Ovary (tissue), 10 donors: ENCODE measurements at regions of chr1 and their contacts with region 1.

Region 1: DNA sequence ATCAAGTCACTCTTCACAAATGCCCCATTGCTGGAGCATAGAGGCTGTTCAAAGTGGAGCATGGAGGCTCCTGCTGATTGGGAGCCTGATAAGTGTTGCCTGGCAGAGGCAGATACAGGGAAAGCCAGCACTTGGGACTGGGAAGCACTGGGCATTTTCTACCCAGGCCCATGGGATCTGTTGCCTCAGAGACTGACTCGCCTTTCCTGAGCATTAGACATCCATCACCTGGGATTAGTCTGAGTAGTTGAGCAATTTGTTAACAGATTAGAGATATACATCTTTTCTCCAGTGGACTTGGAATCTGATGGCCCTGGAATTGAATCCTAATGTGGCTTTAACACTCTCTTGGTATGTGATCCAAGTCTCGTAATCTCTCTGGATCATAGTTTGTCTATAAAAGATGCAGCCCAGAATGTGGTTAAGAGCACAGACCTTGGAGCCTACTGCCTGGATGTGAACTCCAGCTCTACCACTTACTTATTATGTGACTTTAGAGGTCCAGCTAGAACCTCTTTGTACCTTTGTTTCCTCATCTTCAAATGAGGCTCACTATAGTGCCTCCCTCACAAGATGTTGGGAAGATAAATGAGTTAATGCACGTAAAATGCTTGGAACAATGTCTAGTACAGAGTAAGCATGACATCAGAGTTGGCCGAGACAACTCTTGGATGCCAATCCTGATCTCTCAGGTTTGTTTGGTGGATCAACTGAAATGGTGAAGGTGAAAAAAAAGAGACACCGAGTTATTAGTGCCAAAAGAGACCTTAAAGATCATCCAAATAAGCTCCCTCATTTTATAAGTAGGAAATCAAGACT is 38.3 kb upstream of the NRDC start:
- DNase-seq: no peak
- H3K4me3 ChIP-seq: no peak overlapping the region
- H3K27ac ChIP-seq: no peak overlapping the region
- H3K4me1 ChIP-seq: no peaks in the 10 kb centered on the region
- H3K27me3 ChIP-seq: no peaks in the 10 kb centered on the region
- CTCF ChIP-seq: no peak
- EP300 ChIP-seq: no peak
- POLR2A ChIP-seq: no peak

Region 2: GRCh38 chr1:51936531-51936930 is 19.7 kb after region 1 on chr1:
- intact Hi-C with region 1: loop called in 1 of 4 experiments (anchors 1 kb)
- DNase-seq: no peak
- H3K4me3 ChIP-seq: no peak overlapping the region
- H3K27ac ChIP-seq: no peak overlapping the region
- H3K4me1 ChIP-seq: no peaks in the 10 kb centered on the region
- H3K27me3 ChIP-seq: no peaks in the 10 kb centered on the region
- CTCF ChIP-seq: no peak
- EP300 ChIP-seq: no peak
- POLR2A ChIP-seq: no peak